ENCODE measurements at regions of chr3 and their contacts with region 1.

Region 1: DNA sequence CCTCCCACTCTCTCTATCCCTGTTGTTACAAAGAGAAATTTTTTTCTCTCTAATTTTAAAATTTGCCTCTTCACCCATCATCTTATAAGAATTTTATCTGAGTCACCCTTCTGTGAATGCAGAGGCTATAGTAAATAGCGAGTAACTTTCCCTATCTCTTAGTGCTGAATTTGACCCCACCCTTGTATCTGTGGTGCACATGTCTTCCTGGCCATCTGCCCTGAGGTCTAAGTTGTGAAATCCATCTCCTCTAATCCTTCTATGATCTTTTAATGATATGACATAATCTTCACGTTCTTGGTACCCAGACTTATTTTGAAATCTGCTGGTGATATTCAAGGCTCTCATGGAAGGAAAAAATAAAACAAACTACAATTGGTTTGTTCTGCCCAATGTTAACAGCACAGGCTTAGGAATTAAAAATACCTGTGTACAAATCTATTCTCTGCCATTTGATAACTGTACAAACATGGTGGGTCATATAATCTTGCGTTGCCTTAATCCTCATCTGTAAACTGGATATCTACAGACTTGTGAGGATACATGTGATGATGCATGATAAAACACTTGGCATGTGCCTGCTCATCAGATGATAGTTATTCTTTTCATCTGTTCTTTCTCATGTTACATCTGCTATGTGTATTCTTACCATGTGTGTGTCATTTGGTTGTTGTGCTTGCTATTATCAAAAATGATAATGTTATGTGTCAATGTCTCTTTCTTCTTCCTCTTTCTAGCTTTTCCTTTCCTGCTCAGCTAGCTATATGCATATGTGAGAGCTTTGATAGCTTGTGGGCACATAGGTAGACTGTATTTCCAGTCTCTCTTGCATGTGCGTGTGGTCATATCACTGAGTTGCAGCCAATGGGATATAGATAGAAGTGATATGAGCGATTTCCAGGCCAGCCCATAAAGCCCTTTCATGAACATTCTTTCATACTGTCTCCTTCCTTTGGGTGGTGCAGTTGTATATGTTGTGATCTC is 13.7 kb upstream of the CCR3 start:
- DNase-seq: no peak
- H3K4me3 Mint-ChIP-seq: no peak overlapping the region
- H3K27ac Mint-ChIP-seq: no peak overlapping the region
- H3K4me1 Mint-ChIP-seq: peaks cover 11% of the 10 kb centered on the region
- H3K27me3 Mint-ChIP-seq: peaks cover 68% of the 10 kb centered on the region

Region 2: DNA sequence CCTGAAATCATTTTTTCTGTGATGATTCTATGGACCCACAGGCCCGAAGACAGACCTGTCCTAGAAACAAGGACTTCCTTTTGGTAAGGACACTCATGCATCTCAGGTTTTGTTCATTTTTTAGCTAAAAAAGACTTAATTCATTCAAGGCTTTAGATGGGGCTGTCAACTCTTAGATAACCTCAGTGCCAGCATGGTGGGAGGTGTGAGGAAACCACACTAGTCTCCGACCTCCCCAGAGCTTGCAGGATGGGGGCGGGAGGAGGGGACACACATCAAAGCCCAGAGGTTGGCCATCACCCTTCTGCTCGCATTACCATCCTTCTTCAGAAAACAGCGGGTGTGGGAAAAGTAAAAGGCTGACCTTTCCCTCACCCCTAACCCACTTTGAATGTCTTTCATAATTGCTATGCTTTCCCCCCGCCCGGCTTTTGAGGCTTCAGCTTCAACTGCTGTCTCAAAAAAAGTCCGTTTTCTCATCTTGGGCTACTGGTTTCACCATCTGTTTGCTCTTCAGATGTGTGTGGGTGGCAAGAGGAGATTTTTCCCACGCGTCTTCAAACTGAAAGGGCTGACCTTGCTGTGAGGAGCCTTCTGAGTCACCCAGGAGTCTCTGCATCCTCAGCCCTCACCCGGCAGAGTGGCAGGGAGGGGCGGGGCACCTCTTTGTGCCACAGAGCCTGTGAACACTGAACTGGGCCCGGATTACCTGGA is 312.9 kb before region 1 on chr3:
- intact Hi-C with region 1: no loop called
- DNase-seq: peak; percentile 68
- H3K4me3 Mint-ChIP-seq: peak overlapping the region; percentile 23
- H3K27ac Mint-ChIP-seq: peak overlapping the region; percentile 51
- H3K4me1 Mint-ChIP-seq: peaks cover 25% of the 10 kb centered on the region
- H3K27me3 Mint-ChIP-seq: peaks cover 38% of the 10 kb centered on the region

Region 3: GRCh38 chr3:46242120-46242519 is 13.6 kb after region 1 on chr3 and contains the start of gene CCR3:
- intact Hi-C with region 1: no loop called
- DNase-seq: no peak
- H3K4me3 Mint-ChIP-seq: no peak within 1 kb of the TSS
- H3K27ac Mint-ChIP-seq: no peak within 1 kb of the TSS
- H3K4me1 Mint-ChIP-seq: peaks cover 9% of the 10 kb centered on the region
- H3K27me3 Mint-ChIP-seq: peaks cover 57% of the 10 kb centered on the region
- total RNA-seq, gene CCR3: not detected in 2 replicates

Region 4: GRCh38 chr3:46378426-46378942 is 149.9 kb after region 1 on chr3:
- intact Hi-C with region 1: loop called (anchors 5 kb)
- DNase-seq: peak; percentile 43
- H3K4me3 Mint-ChIP-seq: no peak overlapping the region
- H3K27ac Mint-ChIP-seq: no peak overlapping the region
- H3K4me1 Mint-ChIP-seq: peaks cover 28% of the 10 kb centered on the region
- H3K27me3 Mint-ChIP-seq: peaks cover 53% of the 10 kb centered on the region